ENCODE measurements at regions of chr2 and their contacts with region 1.

Region 1: GRCh38 chr2:169910109-169910799 is 83.0 kb downstream of the UBR3 start:
- DNase-seq: no peak
- ATAC-seq: no peak
- H3K4me3 ChIP-seq: no peak overlapping the region
- H3K27ac ChIP-seq: no peak overlapping the region
- H3K4me1 ChIP-seq: no peaks in the 10 kb centered on the region
- H3K27me3 ChIP-seq: no peaks in the 10 kb centered on the region
- CTCF ChIP-seq: no peak

Region 2: DNA sequence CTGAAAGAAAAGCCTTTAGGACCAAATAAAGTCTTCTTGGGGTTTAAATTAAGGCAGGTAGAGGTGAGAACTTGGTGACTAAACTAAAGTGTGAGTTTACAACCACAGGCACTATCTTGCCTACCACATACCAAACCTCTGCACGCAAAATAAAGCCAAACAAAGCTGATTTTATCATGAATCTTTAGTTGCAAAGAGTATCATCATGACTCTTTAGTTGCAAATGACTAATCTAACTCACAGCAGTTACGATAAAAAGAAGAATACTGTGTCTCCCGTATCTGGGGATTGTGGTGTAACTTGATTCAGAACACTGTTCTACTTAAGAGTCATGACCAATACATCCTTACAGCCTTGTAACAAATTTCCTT is 227.2 kb before region 1 on chr2:
- CTCF ChIA-PET with region 1: no interaction called
- POLR2A ChIA-PET with region 1: no interaction called
- in situ Hi-C with region 1: no loop called
- intact Hi-C with region 1: no loop called
- DNase-seq: no peak
- ATAC-seq: no peak
- H3K4me3 ChIP-seq: no peak overlapping the region
- H3K27ac ChIP-seq: no peak overlapping the region
- H3K4me1 ChIP-seq: no peaks in the 10 kb centered on the region
- H3K27me3 ChIP-seq: no peaks in the 10 kb centered on the region
- CTCF ChIP-seq: no peak

Region 3: DNA sequence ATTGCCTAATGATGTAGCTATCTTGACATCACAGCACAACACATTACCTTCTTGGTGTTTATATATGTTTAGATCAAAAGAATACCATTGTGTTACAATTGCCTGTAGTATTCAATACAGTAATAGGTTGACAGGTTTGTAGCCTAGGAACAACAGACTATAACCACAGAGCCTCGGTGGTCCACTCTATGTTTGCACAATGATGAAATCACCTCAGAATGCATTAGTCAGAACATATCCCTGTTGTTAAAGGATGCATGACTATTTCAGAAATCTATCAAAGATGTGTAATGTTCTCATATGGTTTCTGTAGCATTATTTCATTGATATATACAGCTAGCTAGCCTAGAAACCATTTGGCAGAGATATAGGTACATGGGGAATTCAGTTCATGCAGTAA is 94.4 kb before region 1 on chr2:
- CTCF ChIA-PET with region 1: no interaction called
- POLR2A ChIA-PET with region 1: no interaction called
- in situ Hi-C with region 1: no loop called
- intact Hi-C with region 1: no loop called
- DNase-seq: no peak
- ATAC-seq: no peak
- H3K4me3 ChIP-seq: no peak overlapping the region
- H3K27ac ChIP-seq: no peak overlapping the region
- H3K4me1 ChIP-seq: no peaks in the 10 kb centered on the region
- H3K27me3 ChIP-seq: no peaks in the 10 kb centered on the region
- CTCF ChIP-seq: no peak

Region 4: DNA sequence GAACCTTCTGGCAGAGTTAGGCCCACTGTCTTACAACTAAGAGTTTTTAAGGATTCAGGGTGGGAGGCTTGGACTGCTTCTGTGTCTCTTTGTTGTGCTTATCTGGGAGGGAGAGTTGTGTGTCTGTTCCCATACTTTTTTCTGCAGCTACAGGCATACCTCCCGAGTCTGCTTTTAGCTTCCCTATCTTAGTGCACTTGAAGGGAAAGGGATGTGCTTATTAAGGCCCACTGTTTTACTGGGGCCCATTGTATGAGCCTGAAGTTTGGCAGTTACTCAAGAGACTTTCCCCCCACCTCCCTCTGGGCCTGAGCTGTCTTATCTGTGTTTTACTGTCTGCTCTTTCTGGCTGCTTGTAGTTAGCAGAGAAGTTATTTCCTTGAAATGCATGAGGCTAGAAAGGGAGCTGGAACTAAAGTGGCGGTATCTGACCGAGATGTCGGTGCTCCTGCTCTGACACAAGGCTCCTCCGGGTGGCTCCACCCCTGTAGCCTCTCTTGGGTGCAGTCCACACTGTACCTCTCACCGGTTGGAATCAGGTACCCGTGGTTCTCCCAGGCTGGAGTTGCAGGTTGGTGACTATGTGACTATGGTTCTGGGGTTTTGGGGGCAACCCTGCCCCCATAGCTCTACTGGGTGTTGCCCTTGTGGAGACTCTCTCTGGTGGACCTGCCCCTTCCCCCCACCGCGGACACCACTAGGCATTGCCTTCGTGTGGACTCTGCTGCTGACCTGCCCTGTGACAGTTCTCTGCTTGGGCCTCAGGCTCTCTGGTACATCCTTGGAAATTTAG is 70.1 kb before region 1 on chr2:
- CTCF ChIA-PET with region 1: no interaction called
- POLR2A ChIA-PET with region 1: interaction called, 10 read pairs
- in situ Hi-C with region 1: no loop called
- intact Hi-C with region 1: no loop called
- DNase-seq: no peak
- ATAC-seq: peak; percentile 56; the same call in 1 of the 2 replicates
- H3K4me3 ChIP-seq: no peak overlapping the region
- H3K27ac ChIP-seq: no peak overlapping the region
- H3K4me1 ChIP-seq: no peaks in the 10 kb centered on the region; the same call in 1 of the 2 replicates
- H3K27me3 ChIP-seq: no peaks in the 10 kb centered on the region
- CTCF ChIP-seq: no peak

Region 5: GRCh38 chr2:170002096-170002495 is 91.8 kb after region 1 on chr2:
- CTCF ChIA-PET with region 1: interaction called, 10 read pairs
- POLR2A ChIA-PET with region 1: no interaction called
- in situ Hi-C with region 1: no loop called
- intact Hi-C with region 1: no loop called
- DNase-seq: no peak
- ATAC-seq: no peak
- H3K4me3 ChIP-seq: no peak overlapping the region
- H3K27ac ChIP-seq: no peak overlapping the region
- H3K4me1 ChIP-seq: no peaks in the 10 kb centered on the region
- H3K27me3 ChIP-seq: no peaks in the 10 kb centered on the region
- CTCF ChIP-seq: no peak

Region 6: DNA sequence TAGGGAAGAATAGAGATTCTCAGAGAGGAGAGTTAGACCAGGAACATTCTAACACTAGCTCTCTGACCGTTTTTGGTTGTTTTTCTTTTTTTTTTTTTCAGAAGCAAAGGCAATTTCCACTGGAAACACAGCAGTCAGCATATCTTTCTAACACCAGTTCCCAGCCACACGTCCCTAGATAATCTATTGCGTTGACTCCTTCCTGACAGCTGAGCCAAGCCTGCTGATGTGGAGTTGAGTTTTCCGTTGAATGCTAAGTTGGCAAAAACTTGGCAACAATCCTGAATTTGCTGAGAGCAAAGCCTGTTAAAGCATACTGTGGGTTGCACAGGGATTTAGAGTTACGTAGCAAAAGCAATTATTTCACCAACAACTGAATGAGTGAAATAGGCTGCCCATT is 925.8 kb after region 1 on chr2:
- CTCF ChIA-PET with region 1: no interaction called
- POLR2A ChIA-PET with region 1: no interaction called
- in situ Hi-C with region 1: no loop called
- intact Hi-C with region 1: no loop called
- DNase-seq: no peak
- ATAC-seq: no peak
- H3K4me3 ChIP-seq: no peak overlapping the region
- H3K27ac ChIP-seq: no peak overlapping the region
- H3K4me1 ChIP-seq: no peaks in the 10 kb centered on the region
- H3K27me3 ChIP-seq: no peaks in the 10 kb centered on the region
- CTCF ChIP-seq: no peak

Measured in Panc1 (cell line).